ENCODE measurements at regions of chr1 and their contacts with region 1.

Region 1: GRCh38 chr1:109213785-109214468 is at the start of gene SARS1:
- DNase-seq: peak; percentile 81 to 93 (median 88)
- H3K4me3 ChIP-seq: peak within 1 kb of the TSS; percentile 71 to 94
- H3K4me3 Mint-ChIP-seq: peak within 1 kb of the TSS; percentile 95 to 100 (median 98)
- H3K27ac ChIP-seq: peak within 1 kb of the TSS; percentile 78
- H3K27ac Mint-ChIP-seq: peak within 1 kb of the TSS; percentile 93 to 99 (median 96)
- H3K4me1 ChIP-seq: peaks cover 37% of the 10 kb centered on the region
- H3K4me1 Mint-ChIP-seq: peaks cover 24 to 45% (median 38%) of the 10 kb centered on the region in 4 donors
- H3K27me3 ChIP-seq: no peaks in the 10 kb centered on the region
- H3K27me3 Mint-ChIP-seq: no peaks in the 10 kb centered on the region
- total RNA-seq, gene SARS1: 178 to 190 TPM

Region 2: DNA sequence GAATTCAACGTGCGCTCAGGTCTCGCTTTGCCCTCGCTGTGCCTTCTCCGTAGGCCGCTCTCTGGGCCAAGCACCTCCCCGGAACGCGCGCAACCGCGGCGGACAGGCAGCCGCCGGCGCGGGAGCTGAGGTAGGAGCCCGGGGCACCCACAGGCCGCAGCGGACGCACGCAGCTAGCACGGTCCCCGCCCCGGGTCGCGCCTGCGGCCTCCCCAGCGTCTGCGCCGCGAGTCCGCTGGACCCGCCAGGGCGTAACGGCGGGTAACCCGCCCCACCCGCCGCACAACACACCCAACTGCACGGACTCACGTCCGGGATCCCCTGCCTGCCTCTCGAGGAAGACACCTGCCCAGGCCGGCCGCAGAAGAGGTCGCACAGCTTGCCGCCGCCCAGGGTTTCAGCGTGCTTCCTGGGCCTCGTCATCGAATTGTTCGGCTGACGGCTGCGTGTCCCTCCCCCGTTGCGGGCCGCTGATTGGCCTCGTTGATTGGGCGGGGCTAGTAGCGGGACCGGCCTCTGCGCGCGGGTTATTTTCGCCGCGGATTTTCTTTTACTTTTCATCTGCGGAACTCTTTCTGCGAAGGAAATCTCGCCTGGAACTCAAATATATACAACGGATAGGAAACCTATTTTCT is 250.8 kb before region 1 on chr1 and contains the start of gene CLCC1:
- CTCF ChIA-PET with region 1: no interaction called
- POLR2A ChIA-PET with region 1: interaction called, 4 read pairs
- intact Hi-C with region 1: loop called (anchors 5 kb)
- DNase-seq: peak; percentile 92 to 96 (median 94)
- H3K4me3 ChIP-seq: peak within 1 kb of the TSS; percentile 68 to 79
- H3K4me3 Mint-ChIP-seq: peak within 1 kb of the TSS; percentile 88 to 95 (median 90)
- H3K27ac ChIP-seq: peak within 1 kb of the TSS; percentile 81
- H3K27ac Mint-ChIP-seq: peak within 1 kb of the TSS; percentile 91 to 97 (median 96)
- H3K4me1 ChIP-seq: peaks cover 25% of the 10 kb centered on the region
- H3K4me1 Mint-ChIP-seq: peaks cover 18 to 52% (median 31%) of the 10 kb centered on the region in 4 donors
- H3K27me3 ChIP-seq: no peaks in the 10 kb centered on the region
- H3K27me3 Mint-ChIP-seq: no peaks in the 10 kb centered on the region
- total RNA-seq, gene CLCC1: 29.7 to 31.6 TPM

Region 3: DNA sequence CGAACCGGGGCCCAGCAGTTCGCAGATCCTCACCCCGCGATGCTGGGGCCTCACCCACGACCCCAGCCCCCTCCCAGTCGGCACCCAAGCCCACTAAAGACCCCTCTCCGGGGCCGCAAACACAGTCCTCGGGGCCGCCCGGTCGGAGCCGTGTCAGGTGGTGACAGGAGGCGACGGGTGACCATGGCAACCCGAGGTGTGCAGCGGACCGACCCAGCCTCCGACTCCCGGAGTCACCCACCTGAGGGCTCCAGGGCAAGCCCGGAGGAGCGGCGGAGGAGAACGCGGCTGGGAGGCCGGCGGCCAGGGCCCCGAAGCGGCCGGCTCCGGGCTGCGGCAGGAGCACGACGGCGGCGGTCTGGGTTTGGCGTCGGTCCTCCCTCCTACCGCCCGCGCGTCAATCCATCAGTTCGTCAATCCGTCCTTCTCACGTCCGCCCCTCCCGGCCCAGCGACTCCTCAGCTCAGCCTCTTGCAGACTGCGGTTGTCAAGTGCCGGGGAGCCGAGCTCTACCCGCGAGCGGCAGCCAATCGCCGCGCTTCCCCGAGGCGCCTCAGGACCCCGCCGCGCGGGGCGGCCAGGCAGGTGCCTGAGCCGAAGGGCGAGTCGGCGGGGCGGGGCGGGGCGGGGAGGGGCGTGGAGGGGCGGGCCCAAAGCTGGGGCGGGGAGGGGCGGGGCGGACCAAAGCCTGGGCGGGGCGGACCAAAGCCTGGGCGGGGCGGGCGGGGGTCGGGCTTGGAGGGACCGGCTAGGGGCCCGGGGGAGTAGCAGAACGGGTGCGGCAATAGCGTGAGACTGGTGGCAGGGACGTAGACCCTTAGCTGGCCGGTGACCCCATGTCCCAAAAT is 172.1 kb before region 1 on chr1 and contains the start of gene WDR47:
- CTCF ChIA-PET with region 1: no interaction called
- POLR2A ChIA-PET with region 1: interaction called, 10 read pairs
- intact Hi-C with region 1: loop called (anchors 1 kb)
- DNase-seq: peak; percentile 96 to 98 (median 97)
- H3K4me3 ChIP-seq: peak within 1 kb of the TSS; percentile 65 to 92
- H3K4me3 Mint-ChIP-seq: peak within 1 kb of the TSS; percentile 91 to 95 (median 93)
- H3K27ac ChIP-seq: peak within 1 kb of the TSS; percentile 84
- H3K27ac Mint-ChIP-seq: peak within 1 kb of the TSS; percentile 79 to 96 (median 93)
- H3K4me1 ChIP-seq: peaks cover 14% of the 10 kb centered on the region
- H3K4me1 Mint-ChIP-seq: peaks cover 8 to 19% (median 14%) of the 10 kb centered on the region in 4 donors
- H3K27me3 ChIP-seq: no peaks in the 10 kb centered on the region
- H3K27me3 Mint-ChIP-seq: no peaks in the 10 kb centered on the region
- total RNA-seq, gene WDR47: 14.0 to 14.1 TPM

Region 4: DNA sequence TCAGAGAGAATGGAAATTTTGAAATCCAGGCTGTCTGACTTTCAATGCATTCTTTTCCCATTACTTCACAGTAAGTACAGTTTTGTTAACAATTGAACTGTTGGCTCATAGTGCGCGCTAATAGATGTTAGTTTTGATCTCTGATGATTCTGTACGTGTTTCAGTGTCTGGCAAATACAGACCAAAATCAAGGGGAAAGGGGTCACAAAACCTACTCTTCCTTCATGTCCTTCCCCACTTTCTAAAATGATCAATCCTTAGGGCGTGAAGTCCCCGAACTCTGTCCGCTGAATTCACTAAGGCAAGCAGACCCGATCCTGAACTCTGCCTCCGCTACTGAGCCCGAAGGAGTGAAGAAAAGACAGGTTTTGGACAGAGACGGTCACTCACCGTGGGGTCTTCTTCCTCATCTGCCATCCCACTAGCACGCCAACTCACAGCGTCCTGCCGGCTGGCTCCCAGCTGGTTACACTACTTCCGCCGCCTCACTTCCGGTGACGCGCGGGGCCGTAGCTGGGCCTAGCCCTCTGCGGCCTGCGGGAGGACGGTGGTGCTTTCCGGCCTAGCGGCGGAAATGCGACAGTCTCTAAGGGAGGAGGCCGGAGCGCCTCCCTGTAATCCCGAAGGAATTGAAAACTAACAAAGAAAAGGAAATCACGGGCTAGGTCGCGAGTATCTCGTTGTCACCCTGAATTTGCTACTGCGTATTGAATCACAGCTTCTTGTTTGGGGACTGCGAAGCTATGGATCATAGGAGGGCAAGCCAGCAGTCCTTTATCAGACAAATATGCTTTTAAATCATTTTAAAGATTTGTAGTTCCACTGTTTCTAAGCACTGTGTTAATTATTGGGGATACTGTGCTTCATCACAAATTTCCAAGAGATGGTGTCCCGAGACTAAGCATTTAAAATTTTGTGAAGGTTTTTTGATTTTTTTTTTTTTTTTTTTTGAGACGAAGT is 138.1 kb before region 1 on chr1 and contains the start of gene TAF13:
- CTCF ChIA-PET with region 1: no interaction called
- POLR2A ChIA-PET with region 1: interaction called, 11 read pairs
- intact Hi-C with region 1: no loop called
- DNase-seq: peak; percentile 82 to 88 (median 85)
- H3K4me3 ChIP-seq: peak within 1 kb of the TSS; percentile 95 to 99
- H3K4me3 Mint-ChIP-seq: peak within 1 kb of the TSS; percentile 95 to 100 (median 96)
- H3K27ac ChIP-seq: peak within 1 kb of the TSS; percentile 93
- H3K27ac Mint-ChIP-seq: peak within 1 kb of the TSS; percentile 99 to 100 (median 99)
- H3K4me1 ChIP-seq: peaks cover 17% of the 10 kb centered on the region
- H3K4me1 Mint-ChIP-seq: peaks cover 7 to 23% (median 17%) of the 10 kb centered on the region in 4 donors
- H3K27me3 ChIP-seq: no peaks in the 10 kb centered on the region
- H3K27me3 Mint-ChIP-seq: no peaks in the 10 kb centered on the region
- total RNA-seq, gene TAF13: 12.5 to 14.6 TPM

Region 5: DNA sequence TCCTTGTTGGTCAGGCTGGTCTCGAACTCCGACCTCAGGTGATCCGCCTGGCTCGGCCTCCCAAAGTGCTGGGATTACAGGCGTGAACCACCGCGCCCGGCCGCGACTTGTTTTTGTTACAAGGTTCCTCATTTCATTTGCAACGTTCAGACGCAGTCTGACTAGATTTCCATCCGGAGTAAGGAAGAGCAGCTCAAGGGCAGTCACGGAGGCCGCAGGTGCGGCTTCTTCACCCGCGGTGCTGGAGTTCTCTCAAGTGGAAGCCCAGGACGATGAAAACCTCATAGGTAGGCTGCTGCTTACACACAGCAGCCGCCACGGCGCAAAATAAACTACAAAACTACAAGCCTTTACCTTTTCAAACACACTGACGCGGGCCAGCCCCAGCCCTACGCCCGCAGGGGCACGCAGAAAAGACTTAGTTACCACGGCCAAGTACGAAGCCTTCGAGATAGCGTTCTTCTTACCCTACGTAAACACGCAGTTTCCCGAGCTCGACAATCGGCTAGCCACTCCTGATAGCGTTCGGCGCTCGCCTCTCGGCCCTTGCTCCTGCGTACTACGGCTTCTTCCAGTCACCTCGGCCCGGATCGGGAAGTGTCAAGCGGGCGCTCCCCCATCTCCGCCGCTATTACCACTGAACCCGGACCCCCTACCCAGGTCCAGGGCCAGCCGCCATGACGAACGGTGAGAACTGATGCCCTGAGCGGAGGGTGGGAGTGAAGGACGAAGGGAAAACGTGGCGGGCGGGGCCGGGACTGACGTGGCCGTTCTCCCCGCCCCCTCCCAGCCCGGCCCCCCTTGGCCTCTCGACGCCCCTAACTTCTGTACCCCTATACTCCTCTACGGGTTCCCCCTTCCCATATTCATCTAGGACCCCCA is 123.5 kb before region 1 on chr1 and contains the start of gene TMEM167B:
- CTCF ChIA-PET with region 1: no interaction called
- POLR2A ChIA-PET with region 1: interaction called, 14 read pairs
- intact Hi-C with region 1: no loop called
- DNase-seq: peak; percentile 88 to 93 (median 89)
- H3K4me3 ChIP-seq: peak within 1 kb of the TSS; percentile 67 to 72
- H3K4me3 Mint-ChIP-seq: peak within 1 kb of the TSS; percentile 93 to 97 (median 94)
- H3K27ac ChIP-seq: peak within 1 kb of the TSS; percentile 90
- H3K27ac Mint-ChIP-seq: peak within 1 kb of the TSS; percentile 89 to 99 (median 98)
- H3K4me1 ChIP-seq: peaks cover 32% of the 10 kb centered on the region
- H3K4me1 Mint-ChIP-seq: peaks cover 18 to 48% (median 36%) of the 10 kb centered on the region in 4 donors
- H3K27me3 ChIP-seq: no peaks in the 10 kb centered on the region
- H3K27me3 Mint-ChIP-seq: no peaks in the 10 kb centered on the region
- total RNA-seq, gene TMEM167B: 42.9 to 47.9 TPM

Region 6: GRCh38 chr1:109229531-109230127 is 15.7 kb after region 1 on chr1:
- CTCF ChIA-PET with region 1: no interaction called
- POLR2A ChIA-PET with region 1: interaction called, 7 read pairs
- intact Hi-C with region 1: loop called (anchors 2 kb)
- DNase-seq: no peak
- H3K4me3 ChIP-seq: no peak overlapping the region
- H3K4me3 Mint-ChIP-seq: no peak overlapping the region
- H3K27ac ChIP-seq: no peak overlapping the region
- H3K27ac Mint-ChIP-seq: no peak overlapping the region
- H3K4me1 ChIP-seq: no peaks in the 10 kb centered on the region
- H3K4me1 Mint-ChIP-seq: peaks cover 6 to 15% (median 9%) of the 10 kb centered on the region in 4 donors
- H3K27me3 ChIP-seq: no peaks in the 10 kb centered on the region
- H3K27me3 Mint-ChIP-seq: no peaks in the 10 kb centered on the region

Region 7: DNA sequence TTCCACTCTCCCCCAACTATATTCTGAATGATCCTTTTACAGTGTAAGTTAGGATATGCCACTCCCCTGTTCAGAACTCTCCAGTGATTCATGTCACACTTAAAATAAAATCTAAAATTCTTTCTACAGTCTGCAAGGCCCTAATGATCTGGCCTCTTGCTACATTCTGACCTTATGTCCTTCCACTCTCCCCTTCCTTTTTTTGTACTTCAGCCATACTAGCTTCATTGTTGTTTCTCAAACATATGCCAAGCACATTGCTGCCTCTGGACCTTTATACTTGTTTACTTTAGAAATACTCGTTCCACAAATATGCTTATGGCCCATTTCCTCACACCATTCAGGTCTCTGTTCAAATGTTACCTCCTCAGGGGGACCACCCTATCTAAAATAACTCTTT is 227.1 kb after region 1 on chr1:
- CTCF ChIA-PET with region 1: no interaction called
- POLR2A ChIA-PET with region 1: no interaction called
- intact Hi-C with region 1: no loop called
- DNase-seq: no peak
- H3K4me3 ChIP-seq: no peak overlapping the region
- H3K4me3 Mint-ChIP-seq: no peak overlapping the region
- H3K27ac ChIP-seq: no peak overlapping the region
- H3K27ac Mint-ChIP-seq: no peak overlapping the region
- H3K4me1 ChIP-seq: no peaks in the 10 kb centered on the region
- H3K4me1 Mint-ChIP-seq: no peaks in the 10 kb centered on the region
- H3K27me3 ChIP-seq: peaks cover 3% of the 10 kb centered on the region
- H3K27me3 Mint-ChIP-seq: peaks cover 6 to 8% of the 10 kb centered on the region in 2 donors

Region 8: DNA sequence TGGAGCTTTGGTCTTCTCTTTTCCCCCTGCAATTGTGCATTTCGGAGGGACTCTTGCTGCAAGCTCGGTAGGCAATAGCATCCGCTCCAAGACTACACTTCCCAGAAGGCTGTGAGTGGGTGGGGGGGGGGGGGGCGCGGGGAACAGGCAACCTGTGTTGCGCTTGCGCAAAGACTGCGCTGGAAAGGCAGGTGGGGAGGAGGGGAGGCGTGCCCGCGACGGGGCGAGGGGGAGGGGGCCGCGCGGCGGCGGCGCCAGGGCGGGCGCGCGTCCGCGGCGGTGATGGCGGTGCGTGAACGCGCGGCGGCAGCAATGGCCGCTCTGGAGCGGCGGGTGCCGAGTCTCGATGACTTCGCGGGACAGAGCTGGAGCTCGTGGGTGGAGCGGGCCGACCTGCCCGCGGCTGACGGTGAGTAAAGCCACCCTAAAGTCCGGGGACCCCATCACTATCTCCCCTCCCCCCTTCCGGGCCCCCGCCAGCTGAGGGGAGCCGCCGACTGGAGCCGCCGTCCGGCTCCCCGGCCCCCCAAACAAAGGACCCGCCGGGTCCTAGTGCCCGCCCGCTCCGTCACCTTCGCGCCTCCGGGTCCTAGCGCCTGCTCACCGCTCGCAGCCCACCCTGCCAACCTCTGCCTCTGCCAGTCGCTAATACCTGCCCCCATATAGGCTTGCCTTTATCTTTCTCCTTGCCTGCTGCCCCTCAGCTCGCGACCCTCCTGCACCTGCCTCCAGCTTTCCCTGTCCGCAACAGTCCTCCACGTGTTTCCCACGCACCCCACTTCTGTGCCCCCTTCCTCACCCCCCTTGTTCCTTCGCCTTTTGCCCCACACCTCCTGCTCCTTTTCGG is 270.0 kb after region 1 on chr1 and contains the start of gene ATXN7L2:
- CTCF ChIA-PET with region 1: no interaction called
- POLR2A ChIA-PET with region 1: interaction called, 12 read pairs
- intact Hi-C with region 1: loop called (anchors 5 kb)
- DNase-seq: peak; percentile 92 to 95 (median 93)
- H3K4me3 ChIP-seq: peak within 1 kb of the TSS; percentile 95 to 98
- H3K4me3 Mint-ChIP-seq: peak within 1 kb of the TSS; percentile 91 to 96 (median 94)
- H3K27ac ChIP-seq: peak within 1 kb of the TSS; percentile 76
- H3K27ac Mint-ChIP-seq: peak within 1 kb of the TSS; percentile 86 to 97 (median 92)
- H3K4me1 ChIP-seq: peaks cover 20% of the 10 kb centered on the region
- H3K4me1 Mint-ChIP-seq: peaks cover 17 to 42% (median 30%) of the 10 kb centered on the region in 4 donors
- H3K27me3 ChIP-seq: peaks cover 4% of the 10 kb centered on the region
- H3K27me3 Mint-ChIP-seq: peaks cover 0 to 5% of the 10 kb centered on the region in 2 donors
- total RNA-seq, gene ATXN7L2: 7.4 to 9.0 TPM

Region 9: DNA sequence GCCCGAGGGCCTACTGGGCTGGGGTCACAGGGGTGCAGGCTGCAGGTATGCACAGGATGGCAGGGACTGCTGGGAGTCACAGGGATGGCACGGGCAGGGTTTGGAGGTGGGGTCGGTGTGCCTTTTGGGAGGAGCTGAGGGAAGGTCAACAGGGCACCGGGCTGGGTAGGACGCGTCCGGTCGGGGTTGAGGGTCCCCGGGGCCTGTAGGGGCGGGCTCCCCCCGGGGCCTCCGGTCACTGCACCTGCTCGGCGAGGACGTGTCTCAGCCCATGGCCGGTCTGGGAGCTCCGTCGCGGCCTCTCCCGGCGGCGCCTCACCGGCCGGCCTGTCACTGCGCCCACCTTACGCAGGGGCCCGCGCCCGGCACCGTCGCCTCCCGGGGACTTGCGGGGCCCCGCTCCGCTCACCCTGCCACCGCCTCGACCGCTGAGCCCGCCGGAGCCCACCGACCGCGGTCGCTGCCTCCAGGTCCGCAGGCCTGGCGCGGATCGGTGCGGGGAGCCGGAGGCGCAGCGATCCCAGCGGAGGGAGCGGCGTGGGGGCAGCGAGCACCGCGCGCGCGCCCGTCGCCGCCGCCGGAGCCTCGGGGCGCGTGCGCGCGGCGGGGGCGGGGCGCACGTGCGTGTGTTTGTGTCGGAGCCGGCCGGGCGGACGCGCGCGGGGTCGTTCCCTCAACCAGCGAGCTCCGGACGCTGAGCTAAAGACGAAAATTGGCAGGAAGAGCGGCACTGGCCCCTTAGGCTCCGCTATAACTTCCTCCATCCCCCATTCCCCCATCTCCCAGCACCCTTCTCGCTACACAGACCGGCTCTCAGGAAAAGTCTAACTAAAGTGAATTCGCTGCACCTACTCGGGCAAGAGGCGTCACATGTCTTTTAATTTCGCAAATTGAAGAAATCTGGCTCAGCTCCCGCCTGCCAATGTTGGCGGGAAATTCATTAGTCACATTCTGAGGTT is 295.5 kb after region 1 on chr1 and contains the start of gene AMIGO1:
- CTCF ChIA-PET with region 1: no interaction called
- POLR2A ChIA-PET with region 1: no interaction called
- intact Hi-C with region 1: no loop called
- DNase-seq: peak; percentile 65 to 73 (median 68)
- H3K4me3 ChIP-seq: peak within 1 kb of the TSS; percentile 55 to 82
- H3K4me3 Mint-ChIP-seq: peak within 1 kb of the TSS; percentile 92 to 95 (median 94)
- H3K27ac ChIP-seq: peak within 1 kb of the TSS; percentile 54
- H3K27ac Mint-ChIP-seq: peak within 1 kb of the TSS; percentile 85 to 97 (median 95)
- H3K4me1 ChIP-seq: peaks cover 59% of the 10 kb centered on the region
- H3K4me1 Mint-ChIP-seq: peaks cover 48 to 73% (median 60%) of the 10 kb centered on the region in 4 donors
- H3K27me3 ChIP-seq: no peaks in the 10 kb centered on the region
- H3K27me3 Mint-ChIP-seq: no peaks in the 10 kb centered on the region
- total RNA-seq, gene AMIGO1: 28.1 to 29.3 TPM

Region 10: GRCh38 chr1:109838838-109839240 is 624.9 kb after region 1 on chr1:
- CTCF ChIA-PET with region 1: no interaction called
- POLR2A ChIA-PET with region 1: no interaction called
- intact Hi-C with region 1: no loop called
- DNase-seq: no peak
- H3K4me3 ChIP-seq: no peak overlapping the region
- H3K4me3 Mint-ChIP-seq: no peak overlapping the region
- H3K27ac ChIP-seq: no peak overlapping the region
- H3K27ac Mint-ChIP-seq: no peak overlapping the region
- H3K4me1 ChIP-seq: no peaks in the 10 kb centered on the region
- H3K4me1 Mint-ChIP-seq: peaks cover 0 to 4% (median 0%) of the 10 kb centered on the region in 4 donors
- H3K27me3 ChIP-seq: no peaks in the 10 kb centered on the region
- H3K27me3 Mint-ChIP-seq: no peaks in the 10 kb centered on the region